K562 (cell line): ENCODE measurements at regions of chr1 and their contacts with region 1.

Region 1: DNA sequence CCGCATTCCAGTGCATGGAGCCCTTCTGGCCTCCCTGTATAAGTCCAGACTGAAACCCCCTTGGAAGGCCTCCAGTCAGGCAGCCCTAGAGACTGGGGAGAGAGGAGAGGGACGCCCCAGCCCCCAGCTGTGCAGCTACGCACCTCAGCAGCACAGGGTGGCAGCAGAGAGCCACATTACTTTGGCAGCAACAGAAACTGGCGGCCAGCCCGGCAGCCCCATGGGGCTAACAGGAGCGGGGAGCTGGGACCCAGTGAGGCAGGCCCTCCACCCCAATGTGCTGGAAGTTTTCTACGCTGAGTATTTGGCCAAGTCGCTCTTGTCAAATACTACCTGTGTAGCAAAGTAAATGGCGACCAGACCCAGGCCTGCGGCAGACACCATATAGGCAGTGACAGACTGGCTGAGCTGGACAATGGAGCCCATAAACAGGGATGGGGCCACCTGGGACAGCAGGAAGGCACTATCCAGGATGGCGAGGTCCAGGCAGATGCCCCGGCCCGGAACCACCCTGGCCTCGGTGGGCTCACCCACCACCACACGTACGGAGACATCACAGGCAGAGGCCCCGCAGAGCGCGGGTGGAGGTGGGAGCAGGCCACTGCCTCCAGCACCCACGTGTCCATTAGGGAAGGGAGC is 21.2 kb downstream of the SLC45A3 start:
- DNase-seq: peak; percentile 88 to 92 (median 92)
- ATAC-seq: peak; percentile 95
- H3K4me3 ChIP-seq: no peak overlapping the region
- H3K27ac ChIP-seq: no peak overlapping the region
- H3K4me1 ChIP-seq: peaks cover 2 to 28% of the 10 kb centered on the region in 2 experiments; a peak in 3 of 5 replicates
- H3K27me3 ChIP-seq: peaks cover 0 to 5% of the 10 kb centered on the region in 2 experiments; a peak in 1 of 5 replicates
- CTCF ChIP-seq: peak; percentile 96
- EP300 ChIP-seq: no peak
- POLR2A ChIP-seq: no peak
- RAD21 ChIP-seq: peak; percentile 97 to 98

Region 2: DNA sequence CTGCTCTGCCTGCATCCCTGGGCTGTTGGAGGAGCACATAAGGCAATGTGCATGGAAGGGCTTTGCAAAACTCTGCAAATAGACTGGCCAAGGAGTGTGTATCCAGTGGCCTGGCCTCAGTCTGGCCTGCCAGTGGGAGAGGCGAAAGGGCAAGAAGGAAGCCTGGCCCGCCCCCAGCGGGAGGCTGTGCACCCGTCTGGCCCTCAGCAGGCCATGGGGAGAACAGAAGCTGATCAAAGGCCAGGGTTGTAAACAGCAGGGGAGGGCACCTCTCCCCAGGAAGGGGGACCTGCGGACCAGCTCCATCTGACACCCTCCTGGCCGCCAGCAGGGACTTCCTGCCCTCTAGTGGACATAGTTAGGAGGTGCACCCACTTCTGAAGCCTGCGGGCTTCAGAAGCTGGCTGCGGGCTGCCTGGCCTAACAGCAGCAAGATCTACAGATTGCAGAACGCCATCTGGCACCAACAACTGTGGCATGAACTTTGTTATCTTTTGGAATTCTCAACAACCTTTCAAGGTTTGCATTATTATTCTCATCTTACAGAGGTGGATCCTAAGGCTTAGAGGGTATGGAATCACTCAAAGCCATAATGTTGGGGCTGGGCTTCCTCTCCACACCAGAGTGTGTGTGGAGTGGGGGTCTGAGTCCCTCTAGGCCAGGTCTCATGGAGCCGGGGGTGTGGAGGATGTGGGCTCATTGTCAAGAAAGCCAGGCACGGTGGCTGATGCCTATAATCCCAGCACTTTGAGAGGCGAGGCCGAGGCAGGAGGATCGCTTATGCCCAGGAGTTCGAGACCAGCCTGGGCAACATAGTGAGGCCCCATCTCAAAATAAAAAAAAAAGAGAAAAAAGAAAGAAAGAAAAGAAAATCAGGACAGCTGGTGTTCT is 173.5 kb before region 1 on chr1:
- CTCF ChIA-PET with region 1: interaction called, 3 read pairs
- POLR2A ChIA-PET with region 1: no interaction called
- in situ Hi-C with region 1: no loop called
- intact Hi-C with region 1: loop called (anchors 2 kb)
- DNase-seq: peak; percentile 83 to 97 (median 94)
- ATAC-seq: peak; percentile 90
- H3K4me3 ChIP-seq: no peak overlapping the region
- H3K27ac ChIP-seq: no peak overlapping the region
- H3K4me1 ChIP-seq: peaks cover 0 to 4% of the 10 kb centered on the region in 2 experiments; a peak in 1 of 5 replicates
- H3K27me3 ChIP-seq: peaks cover 30 to 58% of the 10 kb centered on the region in 2 experiments
- CTCF ChIP-seq: peak; percentile 97 to 98 (median 98)
- EP300 ChIP-seq: no peak
- POLR2A ChIP-seq: no peak
- RAD21 ChIP-seq: peak; percentile 94 to 98

Region 3: GRCh38 chr1:205591522-205592351 is 67.3 kb before region 1 on chr1:
- CTCF ChIA-PET with region 1: interaction called, 166 read pairs
- POLR2A ChIA-PET with region 1: interaction called, 27 read pairs
- in situ Hi-C with region 1: loop called (anchors 5 kb)
- intact Hi-C with region 1: loop called (anchors 1 kb)
- DNase-seq: peak; percentile 88 to 92 (median 92)
- ATAC-seq: peak; percentile 93
- H3K4me3 ChIP-seq: peak overlapping the region; percentile 21; the same call in 1 of the 2 replicates
- H3K27ac ChIP-seq: no peak overlapping the region; the same call in 2 of the 3 replicates
- H3K4me1 ChIP-seq: peaks cover 3 to 6% of the 10 kb centered on the region in 2 experiments; a peak in 4 of 5 replicates
- H3K27me3 ChIP-seq: no peaks in the 10 kb centered on the region
- CTCF ChIP-seq: peak; percentile 99
- EP300 ChIP-seq: no peak
- POLR2A ChIP-seq: no peak
- RAD21 ChIP-seq: peak; percentile 99 to 100

Region 4: DNA sequence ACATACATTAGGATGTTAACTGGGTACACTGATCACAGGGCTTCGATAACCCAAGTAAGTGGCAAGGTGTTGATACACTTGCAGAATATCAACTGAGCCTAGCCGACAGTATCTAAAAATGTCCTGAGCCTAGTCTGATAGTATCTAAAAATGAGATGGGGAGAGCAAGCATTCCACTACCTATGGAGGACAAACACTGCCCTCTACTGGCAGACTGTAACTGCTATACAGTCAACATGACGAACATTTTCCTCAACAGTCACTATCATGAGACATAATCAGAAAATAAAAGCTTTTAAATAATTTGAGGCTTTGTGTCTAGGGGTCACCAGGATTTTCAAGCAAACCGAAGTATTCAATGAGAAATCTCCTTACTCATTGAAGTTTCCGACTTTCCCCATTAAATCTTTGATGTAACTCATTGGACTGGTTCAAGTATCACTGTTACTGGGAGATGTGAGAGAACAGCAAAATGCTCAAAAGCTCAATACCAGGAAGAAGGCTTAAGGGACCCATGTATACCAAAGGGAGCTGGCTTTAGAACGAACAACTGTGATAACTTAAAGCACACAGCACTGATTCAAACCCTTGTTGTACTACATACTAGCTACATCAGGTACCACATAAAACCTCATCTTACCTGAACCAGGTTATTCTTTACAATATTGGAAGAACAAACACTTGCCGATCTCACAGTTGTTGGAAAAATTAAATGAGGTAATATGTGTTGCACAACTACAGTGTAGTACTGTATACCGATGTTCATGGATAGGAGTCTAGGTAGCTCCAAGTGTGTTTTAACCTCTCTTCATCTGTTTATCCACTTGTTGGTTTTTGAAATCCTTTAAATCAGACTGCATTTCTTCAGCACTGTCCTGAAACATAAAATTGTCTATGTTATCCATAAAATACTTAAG is 52.3 kb after region 1 on chr1:
- CTCF ChIA-PET with region 1: interaction called, 81 read pairs
- POLR2A ChIA-PET with region 1: interaction called, 46 read pairs
- in situ Hi-C with region 1: no loop called
- intact Hi-C with region 1: loop called (anchors 1 kb)
- DNase-seq: peak; percentile 79 to 91 (median 85)
- ATAC-seq: peak; percentile 93
- H3K4me3 ChIP-seq: no peak overlapping the region
- H3K27ac ChIP-seq: no peak overlapping the region
- H3K4me1 ChIP-seq: peaks cover 0 to 18% of the 10 kb centered on the region in 2 experiments; a peak in 3 of 5 replicates
- H3K27me3 ChIP-seq: no peaks in the 10 kb centered on the region
- CTCF ChIP-seq: peak; percentile 87 to 98 (median 95)
- EP300 ChIP-seq: 0 out of 2 replicates have a peak, but pooled peaks have one; percentile 13
- POLR2A ChIP-seq: no peak
- RAD21 ChIP-seq: peak; percentile 99

Region 5: DNA sequence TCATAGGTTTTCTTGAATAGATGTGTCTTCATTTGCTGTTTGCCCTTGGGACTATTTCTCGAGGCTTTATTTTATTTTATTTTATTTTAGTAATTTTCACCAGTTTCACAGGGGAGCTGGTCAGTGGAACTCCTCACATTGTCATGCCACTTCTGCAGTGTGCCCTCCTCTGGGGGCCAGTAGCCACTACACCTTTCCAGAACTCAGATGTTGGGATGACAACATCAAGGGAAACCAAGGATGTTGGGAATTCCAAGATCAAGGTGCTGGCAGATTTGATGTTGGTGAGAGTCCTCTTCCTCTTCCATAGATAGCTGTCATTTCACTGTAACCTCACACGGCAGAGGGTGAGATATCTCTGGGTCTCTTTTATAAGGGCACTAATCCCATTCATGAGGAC is 248.7 kb after region 1 on chr1:
- CTCF ChIA-PET with region 1: interaction called, 6 read pairs
- POLR2A ChIA-PET with region 1: interaction called, 3 read pairs
- in situ Hi-C with region 1: no loop called
- intact Hi-C with region 1: loop called (anchors 2 kb)
- DNase-seq: peak in 3 of 4 experiments; percentile 7 to 36 (median 14)
- ATAC-seq: peak; percentile 85
- H3K4me3 ChIP-seq: no peak overlapping the region
- H3K27ac ChIP-seq: no peak overlapping the region
- H3K4me1 ChIP-seq: no peaks in the 10 kb centered on the region
- H3K27me3 ChIP-seq: peaks cover 3 to 5% of the 10 kb centered on the region in 2 experiments; a peak in 4 of 5 replicates
- CTCF ChIP-seq: peak; percentile 59 to 72 (median 63)
- EP300 ChIP-seq: no peak
- POLR2A ChIP-seq: no peak
- RAD21 ChIP-seq: peak; percentile 64 to 71

Region 6: DNA sequence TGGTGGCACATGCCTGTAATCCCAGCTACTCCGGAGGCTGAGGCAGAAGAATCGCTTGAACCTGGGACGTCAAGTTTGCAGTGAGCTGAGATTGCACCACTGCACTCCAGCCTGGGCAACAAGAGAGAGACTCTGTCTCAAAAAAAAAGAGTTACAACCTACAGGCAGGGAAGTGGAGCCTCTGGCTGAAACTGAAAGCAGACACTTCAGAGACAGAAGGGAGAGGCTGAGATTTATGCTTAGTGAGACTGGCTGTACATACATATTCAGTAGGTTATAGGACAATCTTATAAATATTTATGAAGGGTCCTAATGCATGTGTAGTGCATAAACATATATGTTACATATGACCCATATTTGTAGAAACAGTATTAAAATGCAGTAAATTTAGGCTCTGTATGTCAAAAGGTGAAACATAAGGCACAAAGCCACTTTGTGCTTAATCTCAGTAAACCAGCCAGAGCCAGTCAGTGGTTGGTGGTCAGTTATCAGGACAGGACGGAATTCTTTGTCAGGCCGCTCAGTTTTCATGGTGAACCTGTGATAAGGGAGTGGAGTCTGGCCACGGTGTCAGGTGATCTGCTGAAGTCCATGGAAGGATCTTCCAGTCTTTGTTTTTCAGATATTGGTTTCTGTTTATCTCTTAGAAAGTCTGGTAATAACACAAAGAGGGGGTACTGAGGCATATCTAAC is 407.6 kb after region 1 on chr1:
- CTCF ChIA-PET with region 1: no interaction called
- POLR2A ChIA-PET with region 1: no interaction called
- in situ Hi-C with region 1: no loop called
- intact Hi-C with region 1: no loop called
- DNase-seq: peak; percentile 32 to 75 (median 49)
- ATAC-seq: peak; percentile 90
- H3K4me3 ChIP-seq: no peak overlapping the region
- H3K27ac ChIP-seq: no peak overlapping the region
- H3K4me1 ChIP-seq: peaks cover 6 to 13% of the 10 kb centered on the region in 2 experiments; a peak in 4 of 5 replicates
- H3K27me3 ChIP-seq: peaks cover 15 to 21% of the 10 kb centered on the region in 2 experiments; a peak in 4 of 5 replicates
- CTCF ChIP-seq: no peak
- EP300 ChIP-seq: peak; percentile 87
- POLR2A ChIP-seq: no peak
- RAD21 ChIP-seq: no peak